Activated naive CD4-positive, alpha-beta T cell treated with anti-CD3 and anti-CD28 coated beads for 36 hours (primary cell): ENCODE measurements at regions of chr9 and their contacts with region 1.

Region 1: GRCh38 chr9:136849038-136849959 is at the start of gene PHPT1:
- DNase-seq: peak; percentile 99
- H3K4me3 Mint-ChIP-seq: peak within 1 kb of the TSS; percentile 93
- H3K27ac Mint-ChIP-seq: peak within 1 kb of the TSS; percentile 95
- H3K4me1 Mint-ChIP-seq: peaks cover 14% of the 10 kb centered on the region
- H3K27me3 Mint-ChIP-seq: peaks cover 18% of the 10 kb centered on the region
- total RNA-seq, gene PHPT1: 110 to 116 TPM

Region 2: DNA sequence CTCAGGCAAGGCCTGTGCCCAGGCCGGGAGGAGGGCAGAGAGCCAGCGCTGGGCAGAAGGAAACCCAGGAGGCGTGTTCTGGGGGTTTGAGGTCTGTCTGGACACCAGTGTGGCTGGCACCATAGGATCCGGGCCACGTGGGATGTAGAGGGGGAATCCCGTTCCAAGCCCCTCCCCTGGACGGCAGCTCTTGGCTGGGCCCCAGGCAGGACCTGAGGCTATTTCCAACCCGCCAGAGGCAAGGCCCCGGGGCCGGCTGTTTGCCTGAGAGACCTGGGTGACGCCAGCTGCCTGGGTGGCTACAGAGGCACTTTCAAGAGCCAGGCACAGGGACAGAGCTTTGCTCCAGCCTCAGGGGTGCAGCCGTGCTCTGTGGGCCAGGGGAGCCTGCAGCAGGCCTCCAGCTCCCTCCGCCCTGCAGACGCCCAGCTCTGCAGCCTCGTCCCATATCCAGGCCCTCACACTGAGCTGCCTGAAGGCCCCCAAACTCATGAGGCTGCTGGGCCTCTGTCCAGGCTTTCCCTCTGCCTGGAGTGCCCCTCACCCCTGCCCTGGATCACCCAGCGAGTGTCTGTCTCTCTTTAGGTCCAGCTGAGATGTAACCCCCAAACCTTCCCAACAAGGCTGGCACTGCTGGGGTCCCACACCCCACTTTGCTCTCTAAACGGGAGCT is 243.2 kb before region 1 on chr9:
- CTCF ChIA-PET with region 1: no interaction called
- intact Hi-C with region 1: no loop called
- DNase-seq: no peak
- H3K4me3 Mint-ChIP-seq: no peak overlapping the region
- H3K27ac Mint-ChIP-seq: no peak overlapping the region
- H3K4me1 Mint-ChIP-seq: no peaks in the 10 kb centered on the region
- H3K27me3 Mint-ChIP-seq: peaks cover 24% of the 10 kb centered on the region

Region 3: DNA sequence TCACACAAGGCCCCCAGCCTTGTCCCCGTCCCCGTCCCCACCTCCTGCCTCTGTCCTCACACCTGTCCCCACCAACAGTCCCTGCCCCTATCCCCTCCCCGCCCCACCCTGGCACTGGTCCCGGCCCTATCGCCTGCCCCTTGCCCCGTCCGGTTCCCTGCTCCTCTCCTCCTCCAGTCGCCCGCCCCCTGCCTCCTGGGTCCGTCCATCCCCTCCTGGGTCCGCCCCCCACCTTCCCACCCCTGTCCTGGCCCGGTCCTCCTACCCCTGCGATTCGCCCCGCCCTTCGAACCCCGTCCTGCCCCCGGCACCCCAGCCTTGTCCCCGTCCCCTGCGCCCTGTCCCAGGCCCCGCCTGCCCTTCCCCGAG is 16.4 kb after region 1 on chr9:
- CTCF ChIA-PET with region 1: no interaction called
- intact Hi-C with region 1: loop called (anchors 1 kb)
- DNase-seq: no peak
- H3K4me3 Mint-ChIP-seq: peak overlapping the region; percentile 87
- H3K27ac Mint-ChIP-seq: peak overlapping the region; percentile 69
- H3K4me1 Mint-ChIP-seq: peaks cover 20% of the 10 kb centered on the region
- H3K27me3 Mint-ChIP-seq: no peaks in the 10 kb centered on the region

Region 4: GRCh38 chr9:137269231-137269772 is 420.0 kb after region 1 on chr9:
- CTCF ChIA-PET with region 1: no interaction called
- intact Hi-C with region 1: no loop called
- DNase-seq: no peak
- H3K4me3 Mint-ChIP-seq: no peak overlapping the region
- H3K27ac Mint-ChIP-seq: no peak overlapping the region
- H3K4me1 Mint-ChIP-seq: peaks cover 8% of the 10 kb centered on the region
- H3K27me3 Mint-ChIP-seq: no peaks in the 10 kb centered on the region